AG04449 (cell line): ENCODE measurements at regions of chr1 and their contacts with region 1.

Region 1: DNA sequence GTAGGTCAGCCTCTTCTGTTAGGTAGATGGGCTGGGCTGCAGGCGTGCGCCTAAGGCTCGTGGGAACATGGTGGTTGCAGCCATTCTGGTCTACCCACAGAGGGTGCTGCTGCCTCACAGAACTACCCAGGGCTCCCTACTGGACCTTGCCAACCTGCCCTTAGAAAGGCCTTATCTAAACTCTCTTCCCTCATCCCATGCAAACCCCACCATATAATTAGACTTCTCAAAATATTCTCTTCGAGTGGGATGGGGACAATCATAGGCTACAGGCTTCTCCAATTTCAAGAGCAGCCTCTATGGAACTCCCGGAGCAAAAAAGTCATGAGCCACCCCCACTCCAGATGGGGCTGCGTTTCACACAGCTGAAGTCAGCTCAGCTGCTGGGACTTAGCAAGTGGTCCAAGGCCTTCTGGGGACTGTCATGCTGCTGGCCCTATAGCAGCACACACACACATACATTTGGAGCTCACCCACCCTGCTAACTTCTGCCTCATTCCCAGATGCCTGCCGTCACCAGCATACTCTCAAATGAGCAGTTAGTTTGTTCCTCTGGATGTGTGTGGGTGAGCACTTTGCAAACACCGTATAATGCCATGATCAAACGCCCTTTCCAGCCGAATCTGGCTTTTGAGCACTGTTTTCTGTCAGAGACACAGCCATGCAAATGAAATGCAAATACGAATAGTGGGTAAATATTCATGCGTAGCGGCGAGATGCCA is 6.1 kb upstream of the SDHB start:
- DNase-seq: no peak
- H3K4me3 ChIP-seq: no peak overlapping the region
- CTCF ChIP-seq: peak; percentile 93

Region 2: DNA sequence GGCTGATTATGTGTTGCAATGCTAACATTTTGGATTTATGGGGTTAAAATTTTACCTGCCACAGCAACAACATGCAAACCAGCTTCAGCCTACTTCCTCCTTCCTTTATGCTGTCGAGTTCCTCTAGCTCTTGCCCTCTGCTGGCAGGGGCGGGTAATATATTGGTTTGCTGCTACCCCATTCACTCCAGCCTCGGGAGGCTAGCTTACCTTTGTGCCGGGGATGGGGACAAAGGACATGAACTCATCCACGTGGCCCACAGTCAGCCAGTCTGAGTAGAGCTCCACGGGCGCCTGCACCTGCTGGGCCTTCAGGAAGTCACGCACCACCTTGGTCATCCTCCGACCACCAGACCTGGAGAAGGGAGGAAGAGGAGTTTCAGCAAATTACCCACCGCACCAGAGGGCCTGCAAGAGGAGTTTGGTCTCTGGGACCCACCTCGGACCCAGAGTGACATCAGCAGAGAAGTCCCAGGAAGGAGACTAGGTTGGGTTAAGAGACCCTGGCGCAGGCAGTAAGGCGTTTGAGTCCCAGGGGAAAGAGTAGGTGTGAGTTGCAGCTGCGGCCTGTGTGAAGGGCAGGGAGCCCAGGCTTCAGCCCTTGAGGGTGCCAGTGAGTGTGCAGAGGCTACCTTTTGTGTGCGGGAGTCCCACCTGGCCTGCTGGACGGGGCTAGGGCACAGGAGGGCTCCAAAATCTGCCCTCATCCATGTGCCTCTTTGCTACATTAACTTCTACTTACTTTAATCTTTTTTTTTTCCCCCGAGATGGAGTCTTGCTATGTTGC is 15.8 kb after region 1 on chr1:
- CTCF ChIA-PET with region 1: interaction called, 14 read pairs
- POLR2A ChIA-PET with region 1: no interaction called
- DNase-seq: no peak
- H3K4me3 ChIP-seq: no peak overlapping the region
- CTCF ChIP-seq: peak; percentile 29

Region 3: DNA sequence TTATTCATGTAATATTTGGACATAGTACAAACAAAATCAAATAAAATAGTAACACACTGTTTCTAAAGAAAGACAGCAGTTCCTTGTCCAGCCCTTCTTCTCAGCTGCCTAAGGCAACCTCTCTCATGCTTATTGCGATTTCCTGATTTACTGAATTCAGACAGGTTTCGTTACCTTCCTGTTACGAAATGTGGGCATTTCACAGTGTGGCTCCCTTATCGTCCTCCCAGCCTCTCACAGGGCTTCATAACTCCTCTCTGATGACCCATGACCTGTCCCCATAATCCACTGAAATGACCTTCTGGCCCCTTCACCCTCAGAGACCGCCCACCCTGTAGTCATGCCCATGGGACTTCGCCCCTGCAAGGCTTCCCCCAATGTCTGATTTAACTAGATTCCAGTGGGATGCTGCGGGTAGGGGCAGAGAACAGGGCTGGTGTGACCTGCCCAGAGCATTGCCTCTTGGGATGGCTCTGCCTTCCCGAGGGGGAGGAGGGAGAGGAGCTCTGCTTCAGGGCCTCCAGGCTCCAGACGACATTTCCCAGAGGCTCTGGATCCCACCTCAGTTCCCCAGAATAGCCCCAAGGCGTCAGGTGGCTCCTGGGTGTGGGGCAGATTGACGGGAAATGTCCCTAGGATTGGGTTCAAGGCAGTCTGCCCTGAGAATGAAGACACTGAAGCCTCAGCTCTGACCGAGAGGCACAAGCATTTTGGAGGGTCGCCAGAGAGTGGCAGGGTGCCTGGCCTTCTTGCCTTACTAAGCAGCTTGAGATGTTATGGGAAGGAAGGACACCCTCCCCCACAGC is 38.7 kb after region 1 on chr1:
- CTCF ChIA-PET with region 1: no interaction called
- POLR2A ChIA-PET with region 1: no interaction called
- DNase-seq: no peak
- H3K4me3 ChIP-seq: no peak overlapping the region
- CTCF ChIP-seq: no peak

Region 4: DNA sequence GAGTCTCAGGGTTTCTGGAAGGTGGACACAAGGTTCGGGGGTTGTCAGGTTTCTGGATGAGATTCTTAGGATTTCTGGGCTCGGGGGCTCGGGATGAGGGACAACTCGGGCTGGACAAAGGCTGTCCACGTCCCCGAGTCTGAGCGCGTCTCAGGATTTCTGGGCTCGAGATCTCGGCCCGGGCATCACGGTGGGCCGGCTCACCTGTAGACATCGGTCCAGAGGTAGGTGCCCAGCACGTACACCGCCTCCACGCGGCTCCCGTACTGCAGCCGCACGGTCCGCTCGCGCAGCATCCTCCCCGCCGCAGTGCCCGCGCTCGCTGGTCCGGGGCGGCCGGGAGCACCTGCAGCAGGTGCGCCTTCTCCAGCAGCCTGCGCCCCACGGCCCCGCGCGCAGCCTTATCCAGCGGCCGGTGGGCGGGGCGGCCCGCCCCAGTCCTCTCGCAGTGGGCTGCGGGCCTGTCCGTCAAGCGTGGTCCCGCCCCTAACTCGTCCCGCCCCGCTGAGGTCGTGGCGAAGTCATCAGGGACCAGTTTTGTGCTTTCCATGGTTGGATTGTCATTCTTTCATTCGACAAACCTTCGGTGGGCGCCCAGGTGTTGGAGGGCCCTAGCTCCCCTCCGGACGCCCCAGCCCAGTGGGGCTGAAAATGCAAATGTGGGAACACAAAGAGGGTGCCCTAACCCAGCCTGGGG is 59.3 kb after region 1 on chr1 and contains the start of gene PADI2:
- CTCF ChIA-PET with region 1: interaction called, 38 read pairs
- POLR2A ChIA-PET with region 1: no interaction called
- DNase-seq: no peak
- H3K4me3 ChIP-seq: peak within 1 kb of the TSS; percentile 47
- CTCF ChIP-seq: no peak

Region 5: DNA sequence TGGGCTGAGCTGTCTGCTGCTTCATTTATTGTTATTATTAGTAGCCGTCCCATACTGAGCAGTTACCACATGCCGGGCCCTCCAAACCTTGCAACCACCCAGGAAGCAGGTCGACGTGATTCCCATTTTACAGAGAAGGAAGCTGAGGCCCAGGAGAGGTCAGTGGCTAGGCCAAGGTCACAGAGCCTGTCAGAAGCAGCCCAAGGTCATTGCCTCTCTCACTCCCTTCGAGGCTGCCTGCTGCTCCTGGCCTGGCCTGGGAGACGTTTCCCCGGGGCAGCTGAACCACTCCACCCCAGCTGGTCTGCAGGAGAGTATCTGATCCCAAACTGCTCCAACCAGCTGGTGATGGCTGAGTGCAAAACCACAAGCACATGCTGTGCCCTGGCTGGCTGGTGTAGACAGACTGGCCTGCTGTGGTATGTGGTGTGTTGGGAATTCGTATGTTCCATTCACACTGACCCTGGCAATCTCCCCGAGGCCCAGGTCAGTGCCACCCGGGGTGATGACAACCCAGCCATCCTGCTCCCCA is 254.7 kb after region 1 on chr1:
- CTCF ChIA-PET with region 1: no interaction called
- POLR2A ChIA-PET with region 1: no interaction called
- DNase-seq: no peak
- H3K4me3 ChIP-seq: no peak overlapping the region
- CTCF ChIP-seq: no peak

Region 6: DNA sequence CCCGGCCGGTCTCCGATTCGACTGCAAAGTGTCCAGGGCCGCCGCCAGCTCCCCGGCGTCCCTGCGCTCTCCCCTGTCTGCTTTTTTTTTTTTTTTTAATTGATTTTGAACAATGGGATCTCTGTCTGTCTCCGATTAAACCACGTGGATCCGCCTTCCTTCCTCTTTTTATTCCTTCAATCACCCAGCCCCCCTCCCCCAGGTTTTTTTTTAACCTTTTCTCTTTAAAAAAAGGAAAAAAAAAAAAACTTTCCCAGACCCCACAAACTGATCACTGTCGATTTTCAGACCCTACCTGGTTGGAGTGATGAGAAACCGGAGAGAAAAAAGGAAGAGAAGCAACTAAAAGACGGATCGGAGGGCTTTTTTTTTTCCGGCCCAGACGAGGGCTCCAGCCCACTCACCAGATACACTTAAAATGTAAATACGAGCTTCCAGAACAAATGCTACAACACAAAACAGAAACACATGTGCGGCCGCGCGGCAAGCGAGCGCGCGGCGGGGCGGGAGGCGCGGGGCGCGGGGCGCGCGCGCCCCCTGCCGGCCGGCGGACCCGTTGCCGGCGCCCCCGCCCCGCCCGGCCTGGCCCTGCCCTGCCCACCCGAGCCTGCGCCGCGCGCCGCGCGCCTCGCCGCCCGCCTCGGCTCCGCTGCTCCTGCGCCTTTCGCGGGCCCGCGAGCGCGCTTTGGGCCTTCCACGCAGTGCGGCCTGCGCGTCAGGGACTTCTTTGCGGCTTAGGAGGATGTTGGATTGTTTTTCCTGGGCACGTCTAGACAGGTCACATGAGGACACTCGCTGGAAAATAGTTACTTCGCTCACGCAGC is 379.6 kb after region 1 on chr1 and contains the start of gene RCC2:
- CTCF ChIA-PET with region 1: interaction called, 12 read pairs
- POLR2A ChIA-PET with region 1: no interaction called
- DNase-seq: no peak
- H3K4me3 ChIP-seq: peak within 1 kb of the TSS; percentile 72
- CTCF ChIP-seq: no peak